ENCODE measurements at regions of chr3 and their contacts with region 1.

Region 1: GRCh38 chr3:185983495-185984141 is 45.8 kb upstream of the TRA2B start:
- DNase-seq: peak; percentile 57 to 75 (median 66)
- ATAC-seq: peak; percentile 82 to 96 (median 94)
- H3K4me3 ChIP-seq: peak overlapping the region in 1 of 12 donors; percentile 26
- H3K27ac ChIP-seq: no peak overlapping the region
- H3K4me1 ChIP-seq: peaks cover 0 to 14% (median 4%) of the 10 kb centered on the region in 12 donors
- H3K27me3 ChIP-seq: peaks cover 0 to 11% (median 0%) of the 10 kb centered on the region in 9 donors
- CTCF ChIP-seq: peak; percentile 79 to 96 (median 89)
- POLR2A ChIP-seq: no peak

Region 2: GRCh38 chr3:185796431-185797107 is 187.0 kb before region 1 on chr3:
- intact Hi-C with region 1: no loop called
- DNase-seq: no peak
- ATAC-seq: peak in 1 of 4 donors; percentile 54
- H3K4me3 ChIP-seq: no peak overlapping the region
- H3K27ac ChIP-seq: no peak overlapping the region
- H3K4me1 ChIP-seq: peaks cover 0 to 3% (median 0%) of the 10 kb centered on the region in 12 donors
- H3K27me3 ChIP-seq: no peaks in the 10 kb centered on the region
- CTCF ChIP-seq: no peak
- POLR2A ChIP-seq: no peak

Region 3: DNA sequence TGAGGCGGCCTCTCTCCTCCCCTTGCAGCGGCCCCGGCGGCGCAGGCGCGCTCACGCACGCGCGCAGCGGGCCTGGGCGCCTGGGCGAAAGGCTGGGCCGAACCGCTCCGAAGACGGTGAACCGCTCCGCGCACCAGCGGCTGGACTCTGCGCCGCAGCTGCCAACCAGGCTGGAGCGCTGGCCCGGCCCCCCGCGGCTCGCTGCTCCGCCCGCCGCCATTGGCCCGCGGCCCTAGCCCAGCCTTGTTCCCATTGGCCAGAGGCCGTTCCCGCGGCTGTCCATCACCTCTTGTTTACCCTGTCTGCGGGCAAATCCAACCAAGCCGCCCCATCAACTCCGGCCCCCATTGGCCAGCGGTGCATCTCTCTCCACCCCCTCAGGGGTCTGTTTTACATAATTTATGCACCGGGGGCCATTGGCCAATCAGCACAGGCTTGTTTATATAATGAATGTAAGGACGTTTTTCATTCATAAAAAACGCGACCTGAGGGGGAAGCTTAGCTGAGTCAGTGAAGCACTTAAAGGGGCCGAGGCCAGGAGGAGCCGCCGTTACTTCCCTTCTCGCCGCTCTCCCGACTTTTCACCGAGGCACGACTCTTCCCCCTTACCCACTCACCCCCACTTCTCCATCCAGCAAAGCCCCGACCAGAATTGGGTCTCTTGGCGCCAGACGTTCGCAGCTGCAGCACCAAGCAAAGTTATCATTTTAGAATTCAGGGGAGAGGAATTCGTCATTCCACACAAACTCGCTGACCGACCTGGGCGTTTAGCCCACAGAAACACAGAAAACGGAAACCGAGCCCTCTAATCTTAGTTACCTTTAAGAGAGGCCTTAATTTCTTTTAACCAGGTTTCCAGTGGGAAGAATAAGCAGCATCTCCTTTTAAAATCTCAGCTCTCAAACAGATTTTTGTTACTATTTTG is 125.6 kb after region 1 on chr3 and contains the start of gene ETV5:
- intact Hi-C with region 1: loop called in 1 of 10 experiments (anchors 5 kb)
- DNase-seq: peak; percentile 99 to 100 (median 100)
- ATAC-seq: peak; percentile 98 to 99 (median 99)
- H3K4me3 ChIP-seq: peak within 1 kb of the TSS; percentile 38 to 95 (median 88)
- H3K27ac ChIP-seq: peak within 1 kb of the TSS; percentile 51 to 91 (median 82)
- H3K4me1 ChIP-seq: peaks cover 0 to 35% (median 13%) of the 10 kb centered on the region in 12 donors
- H3K27me3 ChIP-seq: peaks cover 0 to 22% (median 0%) of the 10 kb centered on the region in 9 donors
- CTCF ChIP-seq: peak in 1 of 12 donors; percentile 23
- POLR2A ChIP-seq: peak; percentile 13 to 82
- total RNA-seq, gene ETV5: 4.2 to 29.9 (median 6.9) TPM

Region 4: DNA sequence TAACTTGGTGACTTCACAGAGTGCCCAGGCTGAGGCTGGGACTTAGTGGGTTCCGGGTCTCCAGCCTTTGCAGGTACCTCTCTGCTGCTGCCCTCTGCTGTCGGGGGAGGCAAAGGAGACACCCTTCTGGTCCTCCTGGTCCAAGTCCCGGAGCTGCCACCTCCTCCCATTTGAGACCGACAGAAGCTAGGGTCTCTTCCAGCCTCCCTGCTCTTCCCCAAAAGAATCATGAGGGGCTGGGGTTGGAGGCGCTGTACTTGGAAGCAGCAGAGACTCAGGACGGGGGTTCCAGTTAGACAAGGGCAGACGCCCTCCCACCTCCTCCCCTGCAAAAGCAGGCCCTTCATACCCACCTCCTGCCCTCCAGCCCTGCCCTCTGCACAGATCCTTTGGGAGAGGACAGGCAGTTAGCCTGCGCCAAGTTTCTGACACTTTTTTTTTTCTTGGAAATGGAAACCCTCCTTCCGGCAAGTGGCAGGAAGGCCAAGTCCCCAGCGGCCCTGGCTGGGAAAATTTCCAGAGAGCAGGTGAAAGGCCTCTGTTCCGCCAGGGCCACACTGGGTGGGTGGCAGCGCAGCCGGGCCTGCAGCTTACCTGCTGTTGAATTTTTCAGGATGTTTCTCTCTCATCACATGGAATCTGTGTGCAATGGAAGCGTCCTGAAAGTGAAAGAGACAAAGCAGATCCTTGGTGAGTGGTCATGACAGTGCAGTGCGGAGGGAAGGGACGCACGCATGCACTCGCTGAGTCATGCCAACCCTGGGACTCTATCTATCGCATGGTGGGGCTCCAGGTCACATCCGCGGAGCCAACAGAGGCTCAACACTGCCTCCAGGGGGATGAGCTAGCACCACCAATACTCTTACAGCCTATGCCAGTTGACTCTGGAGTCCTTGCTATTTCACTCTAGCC is 258.5 kb after region 1 on chr3:
- intact Hi-C with region 1: loop called in 9 of 10 experiments (anchors 1 to 10 kb)
- DNase-seq: peak; percentile 73 to 86 (median 80)
- ATAC-seq: peak; percentile 92 to 97 (median 96)
- H3K4me3 ChIP-seq: peak overlapping the region in 11 of 12 donors; percentile 9 to 56 (median 33)
- H3K27ac ChIP-seq: peak overlapping the region; percentile 11 to 82 (median 69)
- H3K4me1 ChIP-seq: peaks cover 0 to 44% (median 23%) of the 10 kb centered on the region in 12 donors
- H3K27me3 ChIP-seq: no peaks in the 10 kb centered on the region
- CTCF ChIP-seq: peak; percentile 32 to 66 (median 45)
- POLR2A ChIP-seq: no peak

Region 5: DNA sequence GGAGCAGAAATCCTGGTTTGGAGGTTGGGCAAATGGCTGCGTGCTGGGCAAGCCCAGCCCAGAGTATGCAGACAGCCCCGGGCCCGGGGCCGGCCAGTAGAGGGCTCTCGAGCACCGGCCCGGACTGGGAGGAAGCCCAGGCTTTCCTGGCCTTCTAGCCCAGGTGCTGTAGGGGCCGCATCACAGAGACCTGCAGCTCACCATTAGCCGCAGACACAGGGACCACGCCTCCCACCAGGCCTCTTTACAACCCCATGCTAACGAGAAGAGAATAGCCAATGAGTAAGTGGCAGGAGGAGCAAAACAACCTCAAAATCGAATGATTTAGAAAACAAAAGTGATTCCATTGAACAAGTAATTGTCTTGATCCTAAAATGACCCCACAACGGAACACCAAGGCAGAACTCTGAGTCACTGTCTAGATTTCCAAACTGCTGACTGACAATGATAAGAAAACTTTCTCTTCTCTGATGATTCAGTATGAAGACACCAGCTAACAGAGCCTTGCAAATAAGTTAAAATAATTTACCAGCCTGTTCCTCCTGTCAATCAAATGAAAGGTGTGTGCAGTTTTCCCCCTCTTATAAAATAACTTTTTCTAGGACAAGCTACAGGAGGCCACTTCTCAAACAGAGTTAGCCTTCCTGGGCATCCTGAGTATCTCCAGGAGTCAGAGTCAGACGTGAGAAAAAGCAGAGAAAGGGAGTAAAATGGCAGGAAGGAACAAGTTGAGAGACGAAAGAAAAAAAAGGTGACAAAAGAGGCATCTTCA is 276.2 kb after region 1 on chr3:
- intact Hi-C with region 1: loop called in 1 of 10 experiments (anchors 5 kb)
- DNase-seq: peak; percentile 44 to 82 (median 54)
- ATAC-seq: peak; percentile 77 to 93 (median 92)
- H3K4me3 ChIP-seq: no peak overlapping the region
- H3K27ac ChIP-seq: no peak overlapping the region
- H3K4me1 ChIP-seq: peaks cover 0 to 8% (median 0%) of the 10 kb centered on the region in 12 donors
- H3K27me3 ChIP-seq: no peaks in the 10 kb centered on the region
- CTCF ChIP-seq: peak; percentile 66 to 87 (median 80)
- POLR2A ChIP-seq: no peak

Region 6: DNA sequence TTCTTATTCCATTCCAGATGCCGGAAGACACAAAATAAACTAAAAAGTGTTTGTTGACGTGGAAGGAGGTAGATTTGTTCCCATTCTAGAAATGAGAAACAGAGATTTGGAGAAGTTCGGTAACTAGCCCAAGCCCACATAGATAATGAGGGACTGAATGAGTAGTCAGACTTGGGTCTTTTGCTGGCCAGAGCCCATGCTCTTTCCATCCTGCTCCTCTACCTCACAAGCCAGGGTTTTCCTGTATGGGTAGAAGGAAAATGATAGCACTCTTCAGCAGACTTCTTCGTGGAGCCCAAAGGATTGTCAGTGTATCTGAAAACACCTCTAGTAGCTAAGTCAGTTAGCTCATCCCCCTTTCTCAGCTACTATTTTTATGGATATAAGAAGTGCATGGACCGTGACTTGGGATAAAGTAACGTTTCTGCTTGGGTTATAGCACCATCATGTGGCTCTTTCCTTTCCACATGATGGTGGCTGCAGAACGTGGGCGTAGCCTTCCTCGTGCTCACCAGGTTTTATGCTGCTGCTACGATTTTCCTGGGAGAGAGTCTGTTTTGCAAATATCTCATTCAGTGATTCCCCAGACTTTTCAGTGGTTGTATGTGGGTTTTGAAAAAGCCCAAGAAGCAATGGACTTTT is 293.8 kb after region 1 on chr3:
- intact Hi-C with region 1: loop called in 7 of 10 experiments (anchors 1 to 10 kb)
- DNase-seq: peak in 1 of 5 donors; percentile 18
- ATAC-seq: peak in 3 of 4 donors; percentile 40 to 69 (median 54)
- H3K4me3 ChIP-seq: no peak overlapping the region
- H3K27ac ChIP-seq: no peak overlapping the region
- H3K4me1 ChIP-seq: peaks cover 0 to 20% (median 8%) of the 10 kb centered on the region in 12 donors
- H3K27me3 ChIP-seq: no peaks in the 10 kb centered on the region
- CTCF ChIP-seq: peak in 10 of 12 donors; percentile 35 to 69 (median 51)
- POLR2A ChIP-seq: no peak

Region 7: GRCh38 chr3:186534113-186534669 is 550.6 kb after region 1 on chr3:
- intact Hi-C with region 1: loop called in 1 of 10 experiments (anchors 10 kb)
- DNase-seq: no peak
- ATAC-seq: peak in 2 of 4 donors; percentile 16 to 60
- H3K4me3 ChIP-seq: no peak overlapping the region
- H3K27ac ChIP-seq: no peak overlapping the region
- H3K4me1 ChIP-seq: peaks cover 0 to 30% (median 7%) of the 10 kb centered on the region in 12 donors
- H3K27me3 ChIP-seq: no peaks in the 10 kb centered on the region
- CTCF ChIP-seq: no peak
- POLR2A ChIP-seq: no peak

Region 8: GRCh38 chr3:186540221-186540834 is 556.7 kb after region 1 on chr3:
- intact Hi-C with region 1: loop called (anchors 1 to 10 kb)
- DNase-seq: peak in 4 of 5 donors; percentile 36 to 64 (median 54)
- ATAC-seq: peak; percentile 53 to 82 (median 80)
- H3K4me3 ChIP-seq: peak overlapping the region in 5 of 12 donors; percentile 11 to 42 (median 26)
- H3K27ac ChIP-seq: no peak overlapping the region
- H3K4me1 ChIP-seq: peaks cover 0 to 23% (median 14%) of the 10 kb centered on the region in 12 donors
- H3K27me3 ChIP-seq: no peaks in the 10 kb centered on the region
- CTCF ChIP-seq: peak; percentile 59 to 79 (median 70)
- POLR2A ChIP-seq: no peak